Activated CD4-positive, alpha-beta T cell treated with anti-CD3 and anti-CD28 coated beads, Interleukin-2, amount 10 ng/mL, durations not matched to agents 24 days and 14 days (primary cell): ENCODE measurements at regions of chrX and their contacts with region 1.

Region 1: GRCh38 chrX:14029425-14030173 is at the start of gene GEMIN8:
- DNase-seq: peak; percentile 95
- H3K4me3 Mint-ChIP-seq: peak within 1 kb of the TSS; percentile 99
- H3K27ac Mint-ChIP-seq: peak within 1 kb of the TSS; percentile 100
- H3K4me1 Mint-ChIP-seq: peaks cover 25% of the 10 kb centered on the region
- H3K27me3 Mint-ChIP-seq: peaks cover 6% of the 10 kb centered on the region
- total RNA-seq, gene GEMIN8: 16.3 and 17.1 TPM in 2 replicates

Region 2: DNA sequence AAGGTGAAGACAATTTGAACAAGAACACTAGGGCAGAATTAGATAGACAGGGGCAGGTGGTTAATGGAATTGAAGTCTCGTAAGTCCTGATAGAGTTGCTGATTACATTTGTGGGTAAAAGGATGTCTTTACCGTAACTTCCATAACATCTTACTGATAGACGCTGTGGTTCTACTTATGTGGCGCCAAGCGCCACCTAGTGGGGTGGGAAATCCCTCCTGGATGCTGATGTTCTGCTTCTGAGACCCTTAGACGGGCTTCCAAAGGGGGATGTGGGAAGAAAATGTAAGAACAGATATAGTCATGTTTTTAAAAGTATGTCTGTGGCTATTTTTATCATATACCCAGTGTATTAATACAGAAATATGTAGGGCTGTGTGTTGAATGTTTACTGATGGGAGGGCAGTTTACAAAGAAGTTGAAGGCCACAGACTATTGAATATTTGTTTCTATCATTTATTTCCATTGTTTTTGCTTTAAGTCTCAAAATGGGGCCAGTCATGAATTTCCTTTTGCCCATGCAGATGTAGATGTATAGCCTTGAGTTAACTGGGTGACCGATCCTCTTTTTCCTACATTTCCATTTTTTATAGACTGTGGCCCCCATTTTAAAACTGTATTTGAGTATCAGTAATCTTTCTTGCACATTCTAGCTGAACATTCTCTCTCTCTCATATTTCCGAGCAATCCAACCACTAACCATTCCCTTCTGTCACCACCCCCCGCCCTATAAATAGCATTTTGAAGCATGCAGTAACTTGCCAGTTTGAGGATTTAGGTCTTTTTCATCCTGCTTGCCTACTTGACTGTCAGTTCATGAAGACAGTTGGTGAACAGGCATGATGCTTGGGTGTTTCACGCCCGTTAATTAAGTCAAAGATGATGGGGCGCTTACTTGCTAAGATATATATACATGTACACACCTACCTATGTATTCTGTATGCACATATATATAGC is 1135.2 kb before region 1 on chrX:
- intact Hi-C with region 1: loop called (anchors 5 kb)
- DNase-seq: peak; percentile 84
- H3K4me3 Mint-ChIP-seq: no peak overlapping the region
- H3K27ac Mint-ChIP-seq: peak overlapping the region; percentile 3
- H3K4me1 Mint-ChIP-seq: peaks cover 46% of the 10 kb centered on the region
- H3K27me3 Mint-ChIP-seq: no peaks in the 10 kb centered on the region

Region 3: DNA sequence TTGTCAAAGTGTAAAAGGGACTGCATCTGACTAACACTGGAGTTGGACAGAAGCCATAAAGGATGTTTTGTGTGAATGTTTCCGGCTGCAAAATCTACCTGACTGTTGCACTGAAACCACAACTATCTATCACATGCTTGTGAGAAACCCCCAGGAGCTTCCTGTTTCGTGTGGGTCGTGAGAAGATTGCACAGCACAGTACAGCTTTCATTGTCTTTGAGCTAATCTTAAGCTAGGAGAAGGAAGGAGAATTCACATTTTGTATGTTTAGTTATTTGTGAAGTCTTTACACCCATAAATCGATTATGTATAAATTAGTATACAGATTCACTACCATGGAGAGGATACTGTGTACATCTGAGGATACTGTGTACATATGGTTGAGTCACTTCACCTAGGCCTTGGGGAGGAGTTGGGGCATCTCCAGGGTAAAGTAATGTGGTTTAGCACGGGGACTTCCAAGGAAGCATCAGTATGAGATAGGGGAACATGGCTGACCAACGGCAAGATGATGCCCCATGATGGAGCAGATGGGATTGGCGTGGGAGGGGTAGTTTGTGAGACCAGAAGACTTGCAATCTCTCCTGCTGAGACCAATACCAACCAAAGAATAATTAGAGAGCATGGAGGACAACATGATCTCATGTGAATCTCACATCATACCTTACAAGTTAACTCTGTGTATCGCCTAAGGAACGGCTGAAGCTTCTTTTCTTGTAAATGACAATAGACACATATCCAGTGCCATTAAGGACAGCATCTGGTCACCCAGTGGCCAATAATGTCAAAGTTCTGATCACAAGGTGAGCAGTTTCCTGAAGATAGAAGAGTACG is 942.1 kb before region 1 on chrX:
- intact Hi-C with region 1: loop called (anchors 5 kb)
- DNase-seq: peak; percentile 90
- H3K4me3 Mint-ChIP-seq: peak overlapping the region; percentile 87
- H3K27ac Mint-ChIP-seq: peak overlapping the region; percentile 100
- H3K4me1 Mint-ChIP-seq: peaks cover 59% of the 10 kb centered on the region
- H3K27me3 Mint-ChIP-seq: no peaks in the 10 kb centered on the region

Region 4: DNA sequence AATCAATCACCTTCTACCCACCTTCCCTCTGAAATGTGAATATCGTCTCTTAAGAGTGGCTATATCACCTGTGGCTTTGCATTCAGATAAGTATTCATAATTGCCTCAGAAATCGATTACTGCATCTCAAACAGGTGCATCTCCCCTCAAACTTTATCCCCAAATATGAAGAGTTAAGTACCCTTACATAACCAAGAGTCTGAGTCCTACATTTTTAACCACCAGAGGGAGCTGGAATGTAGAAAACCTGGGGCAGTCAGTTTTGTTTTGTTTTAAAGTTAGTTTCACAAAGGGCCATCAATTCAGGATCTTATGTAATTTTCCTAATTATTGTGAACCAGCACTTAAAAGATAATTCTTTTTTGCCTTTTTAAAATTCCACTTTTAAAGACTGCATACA is 371.0 kb before region 1 on chrX:
- intact Hi-C with region 1: loop called (anchors 1 kb)
- DNase-seq: peak; percentile 73
- H3K4me3 Mint-ChIP-seq: no peak overlapping the region
- H3K27ac Mint-ChIP-seq: peak overlapping the region; percentile 15
- H3K4me1 Mint-ChIP-seq: peaks cover 17% of the 10 kb centered on the region
- H3K27me3 Mint-ChIP-seq: no peaks in the 10 kb centered on the region

Region 5: DNA sequence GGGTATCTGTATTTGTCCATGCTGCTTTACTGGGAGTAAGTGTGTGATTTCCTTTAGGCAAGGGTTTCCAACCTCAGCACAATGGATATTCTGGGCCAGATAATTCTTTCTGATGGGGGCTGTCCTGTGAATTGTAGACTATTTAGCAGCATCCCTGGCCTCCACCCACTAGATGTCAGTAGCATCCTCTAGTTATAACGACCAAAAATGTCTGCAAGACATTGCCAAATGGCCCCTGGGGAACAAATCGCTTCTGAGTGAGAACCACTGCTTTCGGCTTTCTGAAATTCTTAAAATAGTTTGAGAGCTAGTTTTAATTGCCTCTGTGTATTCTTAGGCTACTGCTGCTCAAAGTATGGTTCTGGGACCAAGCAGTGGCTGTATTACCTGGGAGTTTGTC is 131.5 kb before region 1 on chrX:
- intact Hi-C with region 1: loop called (anchors 1 kb)
- DNase-seq: no peak
- H3K4me3 Mint-ChIP-seq: no peak overlapping the region
- H3K27ac Mint-ChIP-seq: no peak overlapping the region
- H3K4me1 Mint-ChIP-seq: no peaks in the 10 kb centered on the region
- H3K27me3 Mint-ChIP-seq: no peaks in the 10 kb centered on the region

Region 6: GRCh38 chrX:14798805-14799397 is 769.3 kb after region 1 on chrX:
- intact Hi-C with region 1: loop called (anchors 5 kb)
- DNase-seq: no peak
- H3K4me3 Mint-ChIP-seq: no peak overlapping the region
- H3K27ac Mint-ChIP-seq: peak overlapping the region; percentile 65
- H3K4me1 Mint-ChIP-seq: peaks cover 4% of the 10 kb centered on the region
- H3K27me3 Mint-ChIP-seq: no peaks in the 10 kb centered on the region

Region 7: GRCh38 chrX:15059474-15059873 is 1029.9 kb after region 1 on chrX:
- intact Hi-C with region 1: no loop called
- DNase-seq: no peak
- H3K4me3 Mint-ChIP-seq: no peak overlapping the region
- H3K27ac Mint-ChIP-seq: no peak overlapping the region
- H3K4me1 Mint-ChIP-seq: no peaks in the 10 kb centered on the region
- H3K27me3 Mint-ChIP-seq: peaks cover 4% of the 10 kb centered on the region

Region 8: DNA sequence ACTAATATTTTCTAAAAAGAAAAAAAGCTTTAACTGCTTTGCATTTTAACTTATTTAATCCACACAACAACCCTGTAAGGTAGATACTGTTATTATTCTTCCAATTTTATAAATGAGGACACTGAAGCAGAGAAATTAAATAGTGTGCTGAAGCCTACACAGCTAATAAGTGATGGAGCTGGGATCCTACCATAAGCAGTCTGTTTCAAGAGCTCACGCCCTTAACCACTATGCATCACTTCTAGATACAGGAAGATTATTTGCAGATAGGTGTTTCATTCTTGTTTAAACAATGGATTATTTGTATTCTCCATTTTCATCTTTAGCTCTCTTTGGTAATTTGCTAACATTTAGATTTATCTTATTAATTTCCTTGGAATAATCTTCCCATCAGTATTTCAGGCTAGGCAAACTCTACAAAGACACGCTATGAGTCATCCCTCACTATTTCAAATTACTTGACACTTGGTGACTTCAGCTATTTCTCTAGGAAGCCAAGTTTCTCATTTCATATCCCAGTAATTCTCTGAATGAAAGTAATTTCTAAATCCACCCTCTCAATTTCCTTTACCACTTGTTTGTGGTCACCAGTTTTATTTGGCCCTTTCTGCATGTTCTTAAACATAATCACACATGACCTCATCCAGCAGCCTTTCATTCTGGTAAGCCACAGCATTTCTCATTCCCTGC is 1173.0 kb after region 1 on chrX:
- intact Hi-C with region 1: loop called (anchors 2 kb)
- DNase-seq: peak; percentile 56
- H3K4me3 Mint-ChIP-seq: no peak overlapping the region
- H3K27ac Mint-ChIP-seq: no peak overlapping the region
- H3K4me1 Mint-ChIP-seq: peaks cover 32% of the 10 kb centered on the region
- H3K27me3 Mint-ChIP-seq: peaks cover 5% of the 10 kb centered on the region